Posterior vena cava (tissue), 2 donors: ENCODE measurements at regions of chr13 and their contacts with region 1.

Region 1: DNA sequence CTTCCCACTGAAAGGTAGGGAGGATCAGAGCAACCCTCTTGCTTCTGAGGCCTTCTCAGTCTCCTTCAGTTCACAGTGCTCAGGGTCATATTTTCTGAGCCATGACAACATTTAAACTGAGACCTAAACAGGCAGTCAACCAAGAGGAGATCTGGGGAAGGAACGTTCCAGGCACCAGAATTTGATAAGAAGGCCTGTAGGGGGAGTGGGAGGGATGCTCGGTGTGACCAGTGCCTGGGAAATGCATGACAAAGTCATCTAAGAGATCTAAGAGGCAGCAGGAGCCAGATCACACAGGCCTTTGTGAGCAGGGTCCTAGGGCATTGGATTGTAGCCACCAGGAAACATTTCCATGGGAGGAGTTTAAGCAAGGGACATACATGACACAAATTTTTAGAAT is 71.6 kb downstream of the SHISA2 start:
- DNase-seq: no peak

Region 2: GRCh38 chr13:25118378-25118777 is 861.9 kb before region 1 on chr13:
- intact Hi-C with region 1: loop called in 1 of 2 experiments (anchors 5 kb)
- DNase-seq: no peak

Region 3: DNA sequence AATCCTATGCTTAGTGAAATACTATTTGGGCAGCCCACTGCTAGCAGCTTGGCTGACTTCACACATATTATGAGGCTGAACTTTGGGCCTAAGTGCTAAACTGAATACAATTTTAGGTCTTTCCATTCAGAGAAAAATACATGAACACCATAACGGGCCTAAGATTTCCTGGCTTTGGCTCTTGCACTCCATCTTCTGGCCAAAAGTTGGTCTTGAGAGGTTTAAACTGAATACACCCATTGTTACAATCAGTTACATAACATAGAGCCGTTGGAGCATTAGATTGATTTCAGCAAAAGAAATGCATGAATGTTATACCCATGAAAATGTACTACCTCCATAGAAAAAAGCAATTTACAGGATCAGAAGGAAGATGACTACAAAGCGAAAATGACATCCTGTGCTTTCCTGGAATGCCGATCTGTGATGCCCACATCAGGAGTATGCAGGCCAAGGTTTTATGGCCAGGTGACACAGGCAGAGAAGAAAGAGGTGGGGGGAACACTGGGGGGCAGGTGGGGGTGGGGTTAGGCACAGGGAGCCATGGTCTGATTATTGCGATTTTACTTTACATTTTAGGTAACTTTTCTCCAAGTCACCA is 82.7 kb after region 1 on chr13:
- intact Hi-C with region 1: loop called in 1 of 2 experiments (anchors 10 kb)
- DNase-seq: no peak